Esophagus squamous epithelium (tissue), 5 donors: ENCODE measurements at regions of chr2 and their contacts with region 1.

Region 1: DNA sequence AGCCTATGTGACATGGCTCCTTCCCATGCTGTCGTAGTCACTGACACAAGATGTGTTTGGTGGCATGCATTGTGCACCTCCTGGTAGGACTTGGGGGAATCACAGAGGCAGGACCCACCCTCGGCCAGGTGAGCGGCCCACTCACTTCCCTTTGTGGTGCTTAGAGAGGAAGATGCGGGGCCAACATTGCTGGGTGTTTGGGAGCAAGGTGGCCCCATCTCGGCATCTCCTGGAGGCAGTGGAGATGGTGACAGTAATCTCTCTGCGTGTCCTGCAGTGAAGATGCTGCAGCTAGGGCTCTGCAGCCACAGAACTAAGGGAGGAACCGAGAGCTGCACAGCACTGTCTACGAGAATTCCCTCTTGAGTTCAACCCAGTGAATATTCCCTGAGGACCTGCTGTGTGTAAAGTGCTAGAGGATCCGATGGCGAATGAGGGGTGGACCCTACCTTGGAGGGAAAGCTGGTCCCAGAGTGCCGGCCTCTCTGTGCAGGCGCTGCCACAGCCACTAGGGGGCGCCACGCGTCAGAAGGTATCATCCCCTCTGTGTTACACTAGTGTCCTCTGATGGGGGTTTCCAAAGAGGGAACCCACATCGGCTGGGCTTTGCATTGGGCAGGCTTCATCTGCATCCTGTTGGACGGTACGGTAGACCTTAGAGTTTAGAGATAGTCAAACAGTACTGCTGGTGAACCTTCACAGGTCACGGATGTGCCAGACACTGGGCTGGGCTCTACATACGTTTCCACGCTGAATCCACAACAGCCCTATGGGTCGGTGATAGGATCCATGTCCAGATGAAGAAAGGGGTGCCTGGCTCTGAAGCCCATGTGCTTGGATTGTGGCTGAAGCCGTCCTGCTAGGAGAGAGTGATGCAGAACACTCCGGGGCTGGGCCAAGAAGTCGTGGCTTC is 39.2 kb downstream of the COA5 start:
- DNase-seq: no peak
- H3K4me3 ChIP-seq: no peak overlapping the region
- H3K27ac ChIP-seq: no peak overlapping the region
- H3K4me1 ChIP-seq: peaks cover 0 to 12% (median 3%) of the 10 kb centered on the region in 3 donors
- H3K27me3 ChIP-seq: no peaks in the 10 kb centered on the region
- CTCF ChIP-seq: peak; percentile 50 to 78 (median 66)
- POLR2A ChIP-seq: no peak

Region 2: DNA sequence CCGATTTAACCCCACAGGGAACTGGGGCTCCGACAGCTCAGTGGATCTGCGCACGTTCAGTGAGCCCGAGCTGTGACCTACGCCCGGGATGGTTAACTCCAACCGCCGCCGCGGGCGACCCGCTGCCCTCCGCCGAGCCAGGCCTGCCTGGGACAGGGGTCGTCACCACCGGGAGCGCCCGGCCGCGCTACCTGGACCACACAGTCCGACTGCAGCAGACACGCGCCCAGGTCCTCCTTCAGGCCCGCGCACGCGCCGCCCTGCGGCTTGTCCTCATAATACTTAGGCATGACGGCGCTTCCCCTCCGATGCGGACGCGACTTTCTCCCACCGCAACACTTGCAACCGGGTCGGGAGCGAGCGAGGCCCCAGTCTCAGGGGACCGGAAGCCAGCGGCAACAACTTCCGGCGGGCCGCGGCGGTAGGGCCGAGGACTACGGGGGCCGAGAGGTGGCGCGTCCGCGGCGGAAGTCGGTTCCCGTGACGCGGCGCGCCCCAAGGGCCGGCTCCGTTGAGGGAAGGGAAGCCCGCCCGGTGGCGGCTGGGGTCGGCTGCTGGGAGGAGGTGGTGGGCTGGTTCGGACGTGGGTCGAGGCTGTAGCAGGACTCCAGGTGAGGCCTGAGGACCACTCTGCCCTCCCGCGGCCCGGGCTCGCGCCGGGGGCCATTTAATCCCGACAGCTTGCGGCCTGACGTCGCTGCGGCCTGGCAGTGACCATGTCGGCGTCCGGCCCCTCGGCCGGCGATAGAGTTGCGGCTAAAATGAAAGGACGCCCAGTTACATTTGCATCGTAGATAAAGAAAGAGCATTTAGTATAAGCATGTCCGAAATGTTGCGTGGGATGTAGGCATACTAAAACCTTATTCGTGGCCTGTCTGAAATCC is 39.2 kb after region 1 on chr2 and contains the starts of genes COA5 and UNC50:
- intact Hi-C with region 1: loop called (anchors 5 kb)
- DNase-seq: peak; percentile 33
- H3K4me3 ChIP-seq: peak within 1 kb of the TSS; percentile 92 to 99 (median 95)
- H3K27ac ChIP-seq: peak within 1 kb of the TSS; percentile 94 to 97 (median 96)
- H3K4me1 ChIP-seq: peaks cover 34 to 66% (median 34%) of the 10 kb centered on the region in 3 donors
- H3K27me3 ChIP-seq: no peaks in the 10 kb centered on the region
- CTCF ChIP-seq: peak in 1 of 6 experiments; percentile 13
- POLR2A ChIP-seq: peak in 3 of 4 donors; percentile 69 to 86 (median 85)
- total RNA-seq, gene COA5: 15.5 to 37.8 (median 19.4) TPM
- total RNA-seq, gene UNC50: 18.3 to 49.4 (median 36.3) TPM

Region 3: DNA sequence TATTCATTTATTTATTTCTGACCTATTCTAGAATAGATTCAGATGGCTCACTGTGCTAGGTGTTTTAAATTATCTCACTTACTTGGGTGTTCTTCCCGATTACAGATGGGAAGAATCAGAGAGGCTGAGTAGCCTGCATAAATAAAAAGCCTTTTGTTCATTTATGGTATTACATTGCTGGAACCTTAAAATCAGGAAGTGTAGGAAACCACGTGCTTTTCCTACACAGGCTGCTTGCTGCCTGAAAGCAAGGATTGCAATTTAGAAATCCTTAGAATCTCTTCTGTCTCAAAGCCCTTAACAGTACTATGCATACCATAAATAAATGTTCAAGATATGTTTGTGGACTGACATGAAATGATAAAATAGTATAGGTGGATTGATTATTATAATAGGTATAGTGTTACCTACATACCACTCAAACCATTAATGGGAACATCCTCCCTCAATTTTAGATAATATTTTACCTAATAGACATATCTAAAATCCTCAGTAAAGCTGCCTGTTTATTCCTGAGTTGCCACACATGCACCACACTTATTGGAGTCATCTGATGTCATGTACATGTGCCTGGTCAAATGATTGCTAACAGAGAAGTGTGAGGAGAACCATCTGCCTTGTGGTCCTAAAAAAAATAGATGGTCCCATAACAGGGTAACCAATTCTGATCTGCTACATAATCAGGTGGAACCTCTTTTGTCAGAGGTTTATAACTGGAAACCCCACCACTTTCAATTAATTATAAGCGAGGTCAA is 498.9 kb after region 1 on chr2:
- intact Hi-C with region 1: no loop called
- DNase-seq: no peak
- H3K4me3 ChIP-seq: no peak overlapping the region
- H3K27ac ChIP-seq: no peak overlapping the region
- H3K4me1 ChIP-seq: peaks cover 0 to 12% (median 0%) of the 10 kb centered on the region in 3 donors
- H3K27me3 ChIP-seq: no peaks in the 10 kb centered on the region
- CTCF ChIP-seq: no peak
- POLR2A ChIP-seq: no peak